ENCODE measurements at regions of chr7 and their contacts with region 1.

Region 1: DNA sequence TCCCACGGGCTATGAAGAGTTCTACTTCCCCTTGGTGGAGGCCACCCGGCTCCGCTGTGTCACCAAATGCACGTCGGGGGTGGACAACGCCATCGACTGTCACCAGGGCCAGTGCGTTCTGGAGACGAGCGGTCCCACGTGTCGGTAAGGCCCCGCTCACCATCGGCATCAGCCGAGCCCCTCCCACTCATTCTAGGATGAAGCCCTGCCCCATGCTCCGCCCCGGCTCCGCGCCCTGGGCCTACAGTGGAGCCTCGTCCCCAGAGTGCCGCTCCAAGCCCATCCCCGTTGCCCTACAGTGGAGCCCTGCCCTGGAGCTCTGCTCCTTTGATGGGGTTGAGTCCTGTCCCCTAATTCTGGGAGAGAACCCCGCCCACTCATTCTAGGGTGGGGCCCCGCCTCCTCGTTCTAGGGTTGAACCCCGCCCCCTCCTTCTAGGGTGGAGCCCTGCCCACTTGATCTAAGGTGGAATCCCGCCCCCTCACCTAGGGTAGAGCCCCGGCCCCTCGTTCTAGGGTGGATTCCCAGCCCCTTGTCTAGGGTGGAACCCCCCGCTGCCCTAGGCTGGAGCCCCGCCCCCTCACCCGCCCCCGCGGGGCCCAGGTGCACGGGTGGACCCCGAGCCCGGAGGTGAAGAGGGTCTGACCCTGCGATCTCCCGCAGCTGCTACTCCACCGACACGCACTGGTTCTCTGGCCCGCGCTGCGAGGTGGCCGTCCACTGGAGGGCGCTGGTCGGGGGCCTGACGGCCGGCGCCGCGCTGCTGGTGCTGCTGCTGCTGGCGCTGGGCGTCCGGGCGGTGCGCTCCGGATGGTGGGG is 3.4 kb upstream of the MUC12 start:
- DNase-seq: peak; percentile 99
- H3K4me3 ChIP-seq: peak overlapping the region; percentile 23 to 54; a peak in 3 of 4 replicates
- H3K27ac ChIP-seq: no peak overlapping the region
- H3K4me1 ChIP-seq: peaks cover 0 to 7% of the 10 kb centered on the region in 2 experiments; a peak in 1 of 4 replicates
- H3K27me3 ChIP-seq: peaks cover 96% of the 10 kb centered on the region
- CTCF ChIP-seq: peak; percentile 89
- EP300 ChIP-seq: no peak
- RAD21 ChIP-seq: peak; percentile 65

Region 2: DNA sequence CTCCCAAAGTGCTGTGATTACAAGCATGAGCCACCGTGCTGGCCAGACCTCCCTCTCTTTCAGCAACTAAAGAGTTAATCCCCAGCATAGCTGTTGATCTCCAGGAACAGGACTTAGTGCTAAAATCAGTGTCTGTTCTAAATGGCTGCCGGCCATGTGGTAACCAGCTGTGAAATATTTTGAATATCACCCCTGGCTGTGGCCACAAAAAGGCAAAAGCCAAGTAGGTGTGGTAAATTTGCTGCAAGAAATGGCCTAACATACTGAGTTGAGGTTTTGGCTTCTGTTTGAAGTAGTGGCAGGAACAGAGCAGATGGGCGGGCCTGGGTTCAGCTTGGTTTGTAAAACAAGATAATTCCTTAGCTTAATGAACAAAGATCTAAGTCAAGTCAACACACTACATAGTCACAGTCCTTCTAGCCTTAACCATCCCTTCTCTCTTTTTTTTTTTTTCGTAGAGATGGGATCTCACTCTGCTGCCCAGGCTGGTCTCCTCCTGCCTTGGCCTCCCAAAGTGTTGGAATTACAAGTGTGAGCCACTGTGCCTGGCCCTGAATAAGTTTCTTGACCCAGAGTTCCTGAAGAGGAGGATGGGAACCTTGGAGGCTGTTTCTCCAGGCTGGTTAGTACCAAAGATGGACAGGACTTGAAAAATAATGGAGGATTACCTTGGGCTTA is 449.7 kb before region 1 on chr7:
- CTCF ChIA-PET with region 1: no interaction called
- POLR2A ChIA-PET with region 1: no interaction called
- DNase-seq: peak; percentile 79
- H3K4me3 ChIP-seq: no peak overlapping the region
- H3K27ac ChIP-seq: peak overlapping the region in 1 of 2 experiments; percentile 36; a peak in 2 of 4 replicates
- H3K4me1 ChIP-seq: peaks cover 12 to 18% of the 10 kb centered on the region in 2 experiments; a peak in 3 of 4 replicates
- H3K27me3 ChIP-seq: no peaks in the 10 kb centered on the region
- CTCF ChIP-seq: no peak
- EP300 ChIP-seq: no peak
- RAD21 ChIP-seq: no peak

Region 3: DNA sequence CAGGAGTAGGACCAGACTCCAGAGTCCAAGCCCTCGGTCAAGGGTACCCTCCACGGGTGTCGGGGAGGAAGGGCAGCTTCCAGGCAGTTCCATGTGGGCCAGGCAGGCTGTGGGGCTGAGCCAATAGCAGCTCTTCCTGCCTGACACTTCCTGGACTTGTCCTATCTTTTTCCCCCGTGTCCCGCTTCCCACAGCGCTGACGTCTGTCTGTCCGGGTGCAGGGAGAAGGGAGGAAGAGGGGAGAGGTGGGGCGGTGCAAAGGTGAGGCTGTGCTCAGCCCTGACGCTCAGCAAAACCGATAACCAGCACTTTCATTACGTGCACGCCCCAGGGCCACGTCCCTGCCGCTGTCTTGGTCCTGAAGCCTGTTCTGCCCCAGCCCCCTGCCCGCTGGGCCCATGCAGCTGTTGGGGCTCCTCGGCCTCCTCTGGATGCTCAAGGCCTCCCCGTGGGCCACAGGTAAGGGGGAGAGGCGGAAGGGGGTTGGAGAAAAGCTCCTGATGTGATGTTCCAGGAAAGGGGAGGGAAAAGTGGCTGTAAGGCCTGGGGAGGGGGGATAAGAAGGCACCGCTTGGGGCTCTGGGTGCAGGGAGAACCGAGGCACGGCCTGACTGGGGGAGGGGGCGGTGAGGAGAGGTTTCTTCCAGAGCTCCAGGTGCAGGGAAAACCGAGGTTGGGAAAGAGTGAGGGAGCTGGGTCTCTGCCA is 16.6 kb before region 1 on chr7 and contains the start of gene MUC3A:
- CTCF ChIA-PET with region 1: interaction called, 15 read pairs
- POLR2A ChIA-PET with region 1: no interaction called
- DNase-seq: no peak
- H3K4me3 ChIP-seq: no peak within 1 kb of the TSS
- H3K27ac ChIP-seq: no peak within 1 kb of the TSS
- H3K4me1 ChIP-seq: no peaks in the 10 kb centered on the region
- H3K27me3 ChIP-seq: peaks cover 68% of the 10 kb centered on the region
- CTCF ChIP-seq: no peak
- EP300 ChIP-seq: no peak
- RAD21 ChIP-seq: no peak
- polyA plus RNA-seq, gene MUC3A: 0.03 and 0.11 TPM in 2 replicates

Region 4: DNA sequence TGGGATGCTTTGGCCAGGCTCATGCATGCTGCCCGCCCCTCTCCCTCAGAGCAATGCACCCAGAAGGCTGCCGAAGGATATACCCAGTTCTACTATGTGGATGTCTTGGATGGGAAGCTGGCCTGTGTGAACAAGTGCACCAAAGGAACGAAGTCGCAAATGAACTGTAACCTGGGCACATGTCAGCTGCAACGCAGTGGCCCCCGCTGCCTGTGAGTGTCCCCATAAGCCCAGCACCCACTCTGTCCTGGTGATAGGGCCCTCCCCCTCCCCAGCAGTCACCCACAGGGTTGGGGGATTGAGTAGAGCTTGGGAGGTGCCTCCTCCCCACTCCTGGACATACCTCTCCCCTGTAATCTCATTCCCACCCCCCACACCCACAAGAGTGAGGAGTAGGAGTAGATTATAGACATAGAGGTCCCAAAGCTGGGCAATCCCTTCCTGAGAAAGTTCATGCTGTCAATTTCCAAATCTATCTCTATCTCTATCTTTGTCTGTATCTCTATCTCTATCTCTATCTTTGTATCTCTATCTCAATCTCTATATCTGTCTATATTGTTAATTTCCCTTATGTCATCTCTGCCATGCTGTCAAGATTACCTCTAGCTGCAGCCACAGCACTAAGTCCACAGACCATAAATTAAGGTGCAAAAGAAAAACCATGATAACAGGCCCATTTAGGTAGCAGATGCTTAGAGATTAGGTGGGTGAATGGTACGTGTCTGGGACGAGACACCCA is 47.2 kb after region 1 on chr7:
- CTCF ChIA-PET with region 1: interaction called, 14 read pairs
- POLR2A ChIA-PET with region 1: no interaction called
- DNase-seq: no peak
- H3K4me3 ChIP-seq: no peak overlapping the region
- H3K27ac ChIP-seq: no peak overlapping the region
- H3K4me1 ChIP-seq: peaks cover 4% of the 10 kb centered on the region in 2 experiments; a peak in 2 of 4 replicates
- H3K27me3 ChIP-seq: peaks cover 41% of the 10 kb centered on the region
- CTCF ChIP-seq: no peak
- EP300 ChIP-seq: no peak
- RAD21 ChIP-seq: no peak